Transverse colon (tissue), 4 donors: ENCODE measurements at regions of chr9 and their contacts with region 1.

Region 1: DNA sequence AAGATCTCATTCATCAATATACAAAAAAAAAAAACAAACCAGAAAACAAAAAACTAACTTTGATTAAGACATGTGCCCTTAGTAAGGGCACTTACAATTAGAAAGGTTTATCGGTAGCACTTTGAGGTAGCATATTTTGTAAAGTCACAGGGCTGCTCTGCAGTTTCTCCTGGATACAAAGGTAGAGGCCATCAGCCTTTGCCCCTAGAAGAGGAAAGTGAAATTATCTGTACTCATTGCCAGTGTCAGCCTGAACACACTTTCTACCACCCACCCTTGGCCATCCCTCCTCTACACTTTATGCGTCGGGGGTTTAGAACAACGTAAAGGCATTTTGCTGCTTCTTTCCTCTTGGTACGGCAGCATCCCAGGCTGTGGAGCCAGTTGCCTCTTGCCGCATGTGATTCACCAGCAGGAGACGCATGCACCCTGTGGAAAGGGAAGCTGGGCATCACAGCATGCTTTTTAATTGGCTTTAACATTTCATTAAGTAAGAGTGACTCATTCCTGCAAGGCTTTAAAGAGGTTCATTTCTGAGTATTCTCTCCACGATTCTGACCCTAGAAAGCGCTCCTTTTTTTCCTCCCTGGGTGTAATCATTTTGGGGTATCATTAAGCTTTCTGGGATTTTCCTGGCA is 84.6 kb downstream of the CEMIP2 start:
- DNase-seq: no peak
- H3K4me3 ChIP-seq: no peak overlapping the region
- H3K27ac ChIP-seq: peak overlapping the region in 1 of 4 donors; percentile 35
- H3K4me1 ChIP-seq: peaks cover 4 to 64% (median 40%) of the 10 kb centered on the region in 4 donors
- H3K27me3 ChIP-seq: no peaks in the 10 kb centered on the region
- CTCF ChIP-seq: no peak
- EP300 ChIP-seq: no peak
- POLR2A ChIP-seq: no peak

Region 2: DNA sequence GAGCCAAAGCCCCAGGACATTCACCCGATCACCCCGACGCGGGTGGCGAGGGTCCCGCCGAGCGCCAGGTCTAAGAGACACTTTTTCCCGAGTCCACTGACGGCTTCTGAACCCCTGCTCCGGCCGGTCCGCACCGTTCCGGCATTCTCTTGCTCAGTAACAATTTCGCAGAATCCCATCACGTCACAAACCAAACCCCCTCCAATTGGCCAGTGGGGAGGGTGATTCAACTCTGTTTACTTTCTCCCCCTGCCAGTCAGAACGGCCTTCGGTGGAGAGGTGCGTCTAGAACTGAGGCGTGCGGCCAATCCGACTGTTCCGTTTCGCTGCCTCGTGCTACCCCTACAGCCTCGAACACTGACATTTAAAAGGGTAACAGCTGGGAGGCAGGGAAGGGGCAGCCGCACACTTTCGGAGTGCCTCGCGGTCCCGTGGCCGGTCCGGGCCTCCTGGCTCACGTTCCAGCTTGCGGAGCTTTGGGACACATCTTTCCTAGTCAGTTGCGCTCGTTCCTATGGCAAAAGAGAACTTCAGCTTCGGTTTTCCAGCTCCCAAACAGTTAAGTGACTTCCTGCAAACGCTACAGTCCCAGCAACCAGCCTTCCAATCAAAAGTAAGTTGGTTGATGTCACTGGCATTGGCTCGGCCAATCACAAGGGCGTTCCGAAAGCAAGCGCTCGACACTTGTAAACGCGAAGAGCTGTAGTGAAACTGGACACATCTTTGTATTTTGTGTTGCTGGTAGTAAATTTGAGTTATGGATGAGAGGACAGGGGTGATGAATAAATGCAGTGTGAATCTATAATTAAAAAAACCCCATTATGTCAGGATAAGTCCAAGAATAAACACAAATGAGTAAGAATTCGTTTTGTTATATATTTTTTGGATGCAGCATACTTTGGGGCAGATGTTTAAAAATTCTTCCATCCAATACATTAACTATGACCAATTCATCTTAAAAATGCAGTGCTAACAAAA is 1269.6 kb before region 1 on chr9 and contains the start of gene KLF9:
- in situ Hi-C with region 1: no loop called
- intact Hi-C with region 1: loop called (anchors 10 kb)
- DNase-seq: peak; percentile 95
- H3K4me3 ChIP-seq: peak within 1 kb of the TSS; percentile 89 to 96 (median 92)
- H3K27ac ChIP-seq: peak within 1 kb of the TSS; percentile 99 to 100 (median 100)
- H3K4me1 ChIP-seq: peaks cover 21 to 59% (median 44%) of the 10 kb centered on the region in 4 donors
- H3K27me3 ChIP-seq: no peaks in the 10 kb centered on the region
- CTCF ChIP-seq: peak in 1 of 5 experiments; percentile 4
- EP300 ChIP-seq: peak; percentile 91
- POLR2A ChIP-seq: peak; percentile 99
- total RNA-seq, gene KLF9: 60.3 to 111 (median 82.9) TPM

Region 3: DNA sequence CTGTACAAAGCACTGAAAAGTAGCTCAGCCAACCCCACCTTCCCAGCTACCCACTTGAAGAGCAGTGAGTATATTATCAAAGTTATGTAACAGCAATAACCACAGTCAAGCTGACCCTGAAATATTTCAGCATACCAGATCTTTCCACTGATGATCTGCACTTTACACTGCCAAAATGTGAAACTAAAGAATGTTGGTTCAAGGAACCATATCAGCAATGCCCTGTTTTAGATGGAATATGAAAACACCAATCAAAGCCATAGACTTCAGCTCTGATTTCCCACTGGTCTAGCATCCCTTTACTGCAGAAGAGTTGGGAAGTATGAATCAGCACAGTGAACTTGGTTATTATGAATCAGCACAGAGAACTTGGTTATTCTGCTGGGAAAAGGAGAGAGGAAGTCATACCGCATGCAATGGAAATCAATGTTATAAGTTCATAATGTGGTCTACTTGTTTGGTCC is 64.6 kb after region 1 on chr9:
- in situ Hi-C with region 1: loop called in 1 of 4 experiments (anchors 10 kb)
- intact Hi-C with region 1: no loop called
- DNase-seq: no peak
- H3K4me3 ChIP-seq: no peak overlapping the region
- H3K27ac ChIP-seq: no peak overlapping the region
- H3K4me1 ChIP-seq: peaks cover 0 to 23% (median 6%) of the 10 kb centered on the region in 4 donors
- H3K27me3 ChIP-seq: no peaks in the 10 kb centered on the region
- CTCF ChIP-seq: no peak
- EP300 ChIP-seq: no peak
- POLR2A ChIP-seq: no peak